ENCODE measurements at regions of chr9 and their contacts with region 1.

Region 1: DNA sequence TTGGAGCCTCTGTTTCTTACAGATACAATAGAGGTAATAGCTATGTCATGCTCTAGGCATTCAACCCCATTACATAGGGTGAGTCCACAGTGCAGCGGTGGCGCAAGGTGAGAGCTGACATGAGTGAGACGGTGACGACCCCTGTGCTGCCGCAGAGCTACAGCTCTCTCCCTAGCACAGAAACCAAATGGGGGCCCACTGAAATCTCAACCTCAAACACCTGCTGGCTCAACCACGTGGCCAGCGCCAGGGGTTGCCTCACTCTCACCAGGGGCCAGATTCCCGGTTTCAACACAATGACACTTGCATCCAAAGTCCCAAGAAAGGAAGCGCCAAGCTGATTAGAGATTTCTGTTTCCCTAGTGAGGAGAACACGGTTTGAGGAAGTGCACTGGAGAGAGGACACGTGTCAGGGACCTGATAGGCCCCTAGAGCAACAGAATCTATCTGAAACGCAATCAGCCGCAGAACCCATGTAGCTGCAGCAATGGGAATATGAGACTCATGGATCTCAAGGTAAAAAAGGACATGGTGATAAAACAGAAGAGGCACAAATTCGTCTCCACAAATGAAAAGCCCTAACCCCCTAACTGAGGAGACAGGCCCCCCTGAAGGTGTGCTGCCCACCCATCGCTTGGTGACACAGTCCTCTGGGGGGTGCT is 114.3 kb downstream of the CRB2 start:
- DNase-seq: peak; percentile 95
- ATAC-seq: peak; percentile 57
- H3K4me3 ChIP-seq: no peak overlapping the region
- H3K27ac ChIP-seq: peak overlapping the region; percentile 90
- H3K4me1 ChIP-seq: peaks cover 66% of the 10 kb centered on the region
- H3K27me3 ChIP-seq: no peaks in the 10 kb centered on the region
- CTCF ChIP-seq: no peak
- EP300 ChIP-seq: peak; percentile 82 to 91; a peak in 3 of 4 replicates
- POLR2A ChIP-seq: peak; percentile 48 to 59
- RAD21 ChIP-seq: peak; percentile 8; the same call in 1 of the 2 replicates

Region 2: DNA sequence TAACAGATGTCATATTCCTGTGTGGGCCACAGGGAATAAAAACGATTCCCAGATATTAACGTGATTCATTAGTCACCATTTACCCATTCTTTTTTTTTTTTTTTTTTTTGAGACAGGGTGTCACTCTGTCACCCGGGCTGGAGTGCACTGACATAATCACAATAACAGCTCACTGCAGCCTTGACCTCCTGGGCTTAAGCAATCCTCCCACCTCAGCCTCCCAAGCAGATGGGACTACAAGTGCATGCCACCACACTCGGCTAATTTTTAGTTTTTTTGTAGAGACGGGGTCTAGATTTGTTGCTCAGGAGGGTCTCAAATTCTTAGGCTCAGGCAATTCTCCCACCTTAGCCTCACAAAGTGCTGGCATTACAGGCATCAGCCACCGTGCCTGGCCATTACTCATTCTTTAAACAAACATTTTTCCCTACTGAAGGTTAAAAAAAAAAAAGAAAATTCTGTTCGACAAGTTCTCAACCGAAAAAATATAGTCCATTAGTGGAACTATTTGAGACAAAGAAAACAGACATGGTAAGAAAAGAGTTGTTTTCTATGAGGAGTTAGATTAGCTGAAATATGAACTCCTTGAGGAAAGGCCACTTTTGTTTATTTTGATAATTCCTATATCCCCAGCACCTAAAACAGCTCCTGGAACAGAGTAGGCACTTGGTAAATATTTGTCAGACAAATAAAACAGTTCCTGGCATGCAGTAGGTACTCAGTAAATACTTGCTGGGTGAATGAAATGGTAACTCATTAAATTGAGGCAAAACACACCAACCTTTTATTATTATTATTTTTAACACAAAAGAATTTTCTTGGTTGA is 609.7 kb before region 1 on chr9:
- CTCF ChIA-PET with region 1: no interaction called
- POLR2A ChIA-PET with region 1: no interaction called
- in situ Hi-C with region 1: no loop called
- intact Hi-C with region 1: no loop called
- DNase-seq: peak; percentile 15
- ATAC-seq: peak; percentile 29; the same call in 1 of the 3 replicates
- H3K4me3 ChIP-seq: no peak overlapping the region
- H3K27ac ChIP-seq: no peak overlapping the region
- H3K4me1 ChIP-seq: peaks cover 15% of the 10 kb centered on the region
- H3K27me3 ChIP-seq: no peaks in the 10 kb centered on the region
- CTCF ChIP-seq: no peak
- EP300 ChIP-seq: no peak
- POLR2A ChIP-seq: no peak
- RAD21 ChIP-seq: no peak

Region 3: GRCh38 chr9:123269316-123269715 is 200.9 kb before region 1 on chr9:
- CTCF ChIA-PET with region 1: no interaction called
- POLR2A ChIA-PET with region 1: no interaction called
- in situ Hi-C with region 1: no loop called
- intact Hi-C with region 1: no loop called
- DNase-seq: no peak
- ATAC-seq: peak; percentile 48
- H3K4me3 ChIP-seq: peak overlapping the region; percentile 77 to 89 (median 83)
- H3K27ac ChIP-seq: no peak overlapping the region
- H3K4me1 ChIP-seq: peaks cover 48% of the 10 kb centered on the region
- H3K27me3 ChIP-seq: no peaks in the 10 kb centered on the region; a peak in 1 of 5 replicates
- CTCF ChIP-seq: no peak
- EP300 ChIP-seq: no peak
- POLR2A ChIP-seq: no peak
- RAD21 ChIP-seq: no peak

Region 4: GRCh38 chr9:123434619-123435528 is 35.4 kb before region 1 on chr9:
- CTCF ChIA-PET with region 1: no interaction called
- POLR2A ChIA-PET with region 1: interaction called, 8 read pairs
- in situ Hi-C with region 1: no loop called
- intact Hi-C with region 1: loop called (anchors 2 kb)
- DNase-seq: peak; percentile 12
- ATAC-seq: peak; percentile 88
- H3K4me3 ChIP-seq: peak overlapping the region in 2 of 3 experiments; percentile 19 to 34; a peak in 2 of 6 replicates
- H3K27ac ChIP-seq: peak overlapping the region; percentile 69
- H3K4me1 ChIP-seq: peaks cover 46% of the 10 kb centered on the region
- H3K27me3 ChIP-seq: no peaks in the 10 kb centered on the region
- CTCF ChIP-seq: peak; percentile 46
- EP300 ChIP-seq: no peak
- POLR2A ChIP-seq: no peak
- RAD21 ChIP-seq: no peak

Measured in HepG2 (cell line).